ENCODE measurements at regions of chr4 and their contacts with region 1.

Region 1: GRCh38 chr4:87044511-87045233 is 109.9 kb downstream of the AFF1 start:
- DNase-seq: no peak
- ATAC-seq: no peak
- H3K4me3 ChIP-seq: no peak overlapping the region
- H3K4me3 Mint-ChIP-seq: no peak overlapping the region
- H3K27ac ChIP-seq: peak overlapping the region in 1 of 2 donors; percentile 17
- H3K27ac Mint-ChIP-seq: no peak overlapping the region
- H3K4me1 ChIP-seq: peaks cover 26 to 32% of the 10 kb centered on the region in 2 donors
- H3K4me1 Mint-ChIP-seq: peaks cover 35% of the 10 kb centered on the region
- H3K27me3 ChIP-seq: no peaks in the 10 kb centered on the region
- H3K27me3 Mint-ChIP-seq: no peaks in the 10 kb centered on the region
- CTCF ChIP-seq: no peak

Region 2: GRCh38 chr4:87026800-87027495 is 17.7 kb before region 1 on chr4:
- CTCF ChIA-PET with region 1: interaction called, 3 read pairs
- POLR2A ChIA-PET with region 1: no interaction called
- intact Hi-C with region 1: loop called (anchors 2 kb)
- DNase-seq: peak; percentile 82
- ATAC-seq: peak; percentile 96
- H3K4me3 ChIP-seq: no peak overlapping the region
- H3K4me3 Mint-ChIP-seq: peak overlapping the region; percentile 52
- H3K27ac ChIP-seq: peak overlapping the region; percentile 48 to 78
- H3K27ac Mint-ChIP-seq: peak overlapping the region; percentile 80
- H3K4me1 ChIP-seq: peaks cover 40 to 61% of the 10 kb centered on the region in 2 donors
- H3K4me1 Mint-ChIP-seq: peaks cover 52% of the 10 kb centered on the region
- H3K27me3 ChIP-seq: no peaks in the 10 kb centered on the region
- H3K27me3 Mint-ChIP-seq: no peaks in the 10 kb centered on the region
- CTCF ChIP-seq: no peak